ENCODE measurements at regions of chr22 and their contacts with region 1.

Region 1: GRCh38 chr22:36387752-36388518 is at the start of gene MYH9:
- DNase-seq: peak; percentile 100
- H3K4me3 Mint-ChIP-seq: peak within 1 kb of the TSS; percentile 95
- H3K27ac Mint-ChIP-seq: peak within 1 kb of the TSS; percentile 97
- H3K4me1 Mint-ChIP-seq: peaks cover 36% of the 10 kb centered on the region
- H3K27me3 Mint-ChIP-seq: no peaks in the 10 kb centered on the region
- total RNA-seq, gene MYH9: 625 and 633 TPM in 2 replicates

Region 2: DNA sequence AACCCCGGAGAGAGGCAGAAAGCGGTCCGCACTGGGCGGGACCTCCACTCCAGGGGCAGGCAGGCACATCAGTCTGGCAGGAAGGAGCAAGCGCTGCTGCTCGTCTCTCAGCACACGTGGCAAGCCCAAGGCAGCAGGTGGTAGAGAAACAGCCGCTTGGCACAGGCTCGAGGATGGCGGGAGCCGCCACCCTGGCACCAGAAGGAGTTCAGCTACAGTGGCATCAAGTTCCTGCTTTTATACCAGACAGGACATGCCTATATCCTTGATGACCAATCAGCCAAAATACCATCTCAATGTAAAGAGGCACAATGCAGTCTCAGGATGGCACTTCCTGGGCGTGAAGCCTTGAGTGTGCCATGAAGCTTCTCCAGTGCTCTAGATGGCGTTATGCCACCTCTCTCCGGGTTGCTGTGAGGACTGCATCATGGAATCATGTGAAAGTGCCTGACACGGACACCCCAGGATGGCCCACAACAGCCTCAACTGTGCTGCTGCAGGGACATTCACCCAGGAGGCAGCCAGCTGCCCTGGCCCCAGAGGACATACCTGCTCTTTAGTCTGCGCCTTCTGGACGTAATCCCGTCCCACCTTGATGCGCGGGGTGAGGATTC is 70.2 kb before region 1 on chr22:
- intact Hi-C with region 1: no loop called
- DNase-seq: no peak
- H3K4me3 Mint-ChIP-seq: no peak overlapping the region
- H3K27ac Mint-ChIP-seq: no peak overlapping the region
- H3K4me1 Mint-ChIP-seq: peaks cover 6% of the 10 kb centered on the region
- H3K27me3 Mint-ChIP-seq: no peaks in the 10 kb centered on the region

Region 3: DNA sequence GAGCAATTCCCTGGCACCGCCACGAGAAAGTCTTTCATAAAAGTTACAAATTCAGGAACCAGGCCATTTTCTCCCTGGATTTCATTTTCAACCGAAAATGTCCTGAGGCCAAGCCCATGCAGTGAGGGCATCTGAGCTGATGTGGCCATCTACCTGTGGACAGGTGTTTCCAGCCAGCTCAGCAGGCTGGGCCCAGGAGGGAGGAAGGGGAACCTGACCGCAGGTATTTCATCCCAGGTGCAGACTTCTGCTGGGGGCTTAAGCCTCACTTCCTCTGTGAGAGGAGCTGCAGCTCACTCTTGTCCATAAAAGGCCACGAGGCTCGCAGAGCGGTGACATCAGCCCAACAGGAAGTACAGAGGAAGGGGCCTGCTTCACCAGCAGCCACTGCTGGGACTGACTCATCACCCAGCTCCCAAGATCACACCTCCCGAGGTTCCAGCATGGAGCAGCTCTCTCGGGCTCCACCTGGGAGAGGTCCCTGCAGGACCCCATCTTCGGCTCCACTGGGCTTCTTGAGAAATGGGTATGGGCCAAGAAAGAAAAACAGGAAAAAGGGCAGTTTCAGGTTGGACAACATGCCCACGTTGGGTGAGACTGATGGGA is 56.5 kb before region 1 on chr22:
- intact Hi-C with region 1: loop called (anchors 1 kb)
- DNase-seq: peak; percentile 94
- H3K4me3 Mint-ChIP-seq: peak overlapping the region; percentile 88
- H3K27ac Mint-ChIP-seq: peak overlapping the region; percentile 99
- H3K4me1 Mint-ChIP-seq: peaks cover 92% of the 10 kb centered on the region
- H3K27me3 Mint-ChIP-seq: no peaks in the 10 kb centered on the region

Region 4: DNA sequence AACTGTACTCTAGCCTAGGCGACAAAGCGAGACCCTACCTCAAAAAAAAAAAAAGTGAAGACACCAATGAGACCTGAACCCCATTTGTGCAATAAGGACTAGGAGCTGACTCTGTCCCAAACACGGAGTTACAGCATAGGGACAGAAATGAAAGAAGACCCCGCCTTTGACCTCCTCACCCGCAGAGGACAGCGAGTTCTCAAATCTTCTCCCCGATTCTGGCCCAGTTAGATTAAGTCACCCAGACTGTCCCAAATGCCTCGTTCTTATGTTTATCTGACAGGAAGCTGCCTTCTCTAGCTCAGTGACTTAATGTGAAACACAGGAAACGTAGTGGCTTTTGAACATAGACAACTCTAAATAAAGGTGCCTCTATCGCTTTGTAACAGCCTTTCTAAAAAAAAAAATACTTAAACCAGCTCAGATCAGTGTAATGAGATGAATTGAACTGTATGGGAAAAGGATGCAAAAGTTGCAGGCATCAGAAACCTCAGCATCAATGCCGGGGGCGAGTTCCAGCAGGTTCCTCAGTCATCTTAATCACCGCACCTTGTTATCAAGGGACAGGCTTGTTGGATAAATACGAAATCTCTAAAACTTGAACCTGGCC is 10.8 kb before region 1 on chr22:
- intact Hi-C with region 1: loop called (anchors 1 kb)
- DNase-seq: peak; percentile 88
- H3K4me3 Mint-ChIP-seq: peak overlapping the region; percentile 88
- H3K27ac Mint-ChIP-seq: peak overlapping the region; percentile 98
- H3K4me1 Mint-ChIP-seq: peaks cover 81% of the 10 kb centered on the region
- H3K27me3 Mint-ChIP-seq: no peaks in the 10 kb centered on the region

Region 5: GRCh38 chr22:36454916-36455570 is 67.1 kb after region 1 on chr22:
- intact Hi-C with region 1: loop called (anchors 1 kb)
- DNase-seq: peak; percentile 98
- H3K4me3 Mint-ChIP-seq: peak overlapping the region; percentile 71
- H3K27ac Mint-ChIP-seq: peak overlapping the region; percentile 77
- H3K4me1 Mint-ChIP-seq: peaks cover 41% of the 10 kb centered on the region
- H3K27me3 Mint-ChIP-seq: no peaks in the 10 kb centered on the region

Region 6: GRCh38 chr22:36481393-36482168 is 93.6 kb after region 1 on chr22 and contains the start of gene TXN2:
- intact Hi-C with region 1: loop called (anchors 1 kb)
- DNase-seq: peak; percentile 98
- H3K4me3 Mint-ChIP-seq: peak within 1 kb of the TSS; percentile 90
- H3K27ac Mint-ChIP-seq: peak within 1 kb of the TSS; percentile 87
- H3K4me1 Mint-ChIP-seq: peaks cover 19% of the 10 kb centered on the region
- H3K27me3 Mint-ChIP-seq: no peaks in the 10 kb centered on the region
- total RNA-seq, gene TXN2: 96.5 and 98.7 TPM in 2 replicates

Region 7: DNA sequence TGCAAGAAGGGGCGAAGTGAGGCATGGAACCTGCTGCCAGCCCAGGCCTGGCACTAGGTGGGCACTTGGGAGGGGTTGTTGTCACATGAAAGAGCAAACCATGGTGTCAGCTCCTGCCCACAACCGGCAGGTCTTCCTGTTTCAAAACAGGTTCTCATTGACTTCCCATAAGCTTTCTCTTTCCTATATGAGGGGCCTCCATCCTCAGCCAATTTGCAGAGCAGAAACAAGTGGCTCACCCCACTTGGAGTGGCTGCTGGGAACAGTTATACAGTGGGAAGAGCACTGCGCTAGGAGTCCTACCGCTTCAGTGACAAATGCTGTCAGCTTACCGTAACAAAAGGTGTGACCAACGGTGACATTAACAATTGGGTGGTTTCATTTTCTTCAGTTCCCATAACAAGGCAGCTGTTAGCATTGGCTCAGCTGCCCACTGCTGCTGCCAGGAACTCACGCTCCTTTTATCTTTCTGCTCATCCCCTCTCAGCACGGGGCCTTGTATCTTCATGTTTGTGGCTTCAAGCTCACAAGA is 834.6 kb after region 1 on chr22:
- intact Hi-C with region 1: loop called (anchors 5 kb)
- DNase-seq: peak; percentile 88
- H3K4me3 Mint-ChIP-seq: peak overlapping the region; percentile 83
- H3K27ac Mint-ChIP-seq: peak overlapping the region; percentile 96
- H3K4me1 Mint-ChIP-seq: peaks cover 85% of the 10 kb centered on the region
- H3K27me3 Mint-ChIP-seq: no peaks in the 10 kb centered on the region